Activated CD4-positive, alpha-beta T cell treated with anti-CD3 and anti-CD28 coated beads for 36 hours (primary cell): ENCODE measurements at regions of chr5 and their contacts with region 1.

Region 1: GRCh38 chr5:50744776-50745175 is 78.3 kb downstream of the PARP8 start:
- DNase-seq: no peak
- ATAC-seq: peak; percentile 57
- H3K4me3 Mint-ChIP-seq: peak overlapping the region; percentile 73
- H3K27ac Mint-ChIP-seq: peak overlapping the region; percentile 91
- H3K4me1 Mint-ChIP-seq: peaks cover 64% of the 10 kb centered on the region
- H3K27me3 Mint-ChIP-seq: no peaks in the 10 kb centered on the region

Region 2: GRCh38 chr5:50694027-50694590 is 50.7 kb before region 1 on chr5:
- CTCF ChIA-PET with region 1: no interaction called
- POLR2A ChIA-PET with region 1: no interaction called
- intact Hi-C with region 1: no loop called
- DNase-seq: no peak
- ATAC-seq: peak; percentile 71
- H3K4me3 Mint-ChIP-seq: no peak overlapping the region
- H3K27ac Mint-ChIP-seq: no peak overlapping the region
- H3K4me1 Mint-ChIP-seq: peaks cover 42% of the 10 kb centered on the region
- H3K27me3 Mint-ChIP-seq: no peaks in the 10 kb centered on the region

Region 3: DNA sequence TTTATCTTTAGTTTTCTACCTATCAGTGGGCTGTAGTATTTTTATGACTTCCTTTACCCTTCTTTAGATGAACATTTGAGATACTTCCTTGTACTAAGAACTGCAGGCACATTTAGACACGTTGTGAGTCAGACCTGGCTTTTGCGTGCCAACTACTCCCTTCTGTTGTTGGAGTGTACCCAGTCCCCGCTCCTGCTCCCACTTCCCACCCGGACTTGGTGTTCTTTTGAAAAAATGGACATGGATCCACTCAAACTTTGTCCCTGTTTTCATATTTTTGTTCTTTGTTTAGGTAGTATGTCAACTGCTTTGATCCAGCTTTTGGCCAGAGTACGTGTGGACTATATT is 17.7 kb before region 1 on chr5:
- CTCF ChIA-PET with region 1: interaction called, 6 read pairs
- POLR2A ChIA-PET with region 1: no interaction called
- intact Hi-C with region 1: loop called in 1 of 2 experiments (anchors 2 kb)
- DNase-seq: peak; percentile 61
- ATAC-seq: peak; percentile 88
- H3K4me3 Mint-ChIP-seq: peak overlapping the region; percentile 45
- H3K27ac Mint-ChIP-seq: peak overlapping the region; percentile 91
- H3K4me1 Mint-ChIP-seq: peaks cover 60% of the 10 kb centered on the region
- H3K27me3 Mint-ChIP-seq: no peaks in the 10 kb centered on the region

Region 4: DNA sequence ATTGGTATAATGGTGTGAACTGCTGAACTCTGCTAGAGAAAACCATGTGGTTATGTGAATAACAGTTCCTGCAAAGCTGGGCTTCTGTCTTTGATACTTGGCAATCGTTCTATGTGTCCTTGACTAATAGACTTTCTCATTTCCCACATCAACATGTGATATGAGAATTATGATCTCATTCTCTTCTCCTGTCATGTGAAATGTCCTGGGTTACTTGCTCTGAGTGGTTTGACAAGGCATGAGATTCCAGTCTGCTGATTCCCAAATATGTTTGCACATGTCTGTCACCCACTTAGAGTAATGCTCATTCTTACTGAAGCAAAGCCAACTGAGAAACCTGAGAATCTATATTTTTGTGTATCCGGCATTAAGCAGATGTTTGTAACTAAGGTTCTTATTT is 62.9 kb after region 1 on chr5:
- CTCF ChIA-PET with region 1: no interaction called
- POLR2A ChIA-PET with region 1: no interaction called
- intact Hi-C with region 1: no loop called
- DNase-seq: no peak
- ATAC-seq: no peak
- H3K4me3 Mint-ChIP-seq: no peak overlapping the region
- H3K27ac Mint-ChIP-seq: no peak overlapping the region
- H3K4me1 Mint-ChIP-seq: no peaks in the 10 kb centered on the region
- H3K27me3 Mint-ChIP-seq: no peaks in the 10 kb centered on the region